Calu3 (cell line): ENCODE measurements at regions of chr6 and their contacts with region 1.

Region 1: GRCh38 chr6:3410385-3411360 is 46.2 kb downstream of the SLC22A23 start:
- DNase-seq: peak; percentile 60
- H3K4me3 Mint-ChIP-seq: no peak overlapping the region
- H3K27ac Mint-ChIP-seq: peak overlapping the region; percentile 41
- H3K4me1 Mint-ChIP-seq: peaks cover 28% of the 10 kb centered on the region
- H3K27me3 Mint-ChIP-seq: no peaks in the 10 kb centered on the region
- CTCF ChIP-seq: peak; percentile 66

Region 2: DNA sequence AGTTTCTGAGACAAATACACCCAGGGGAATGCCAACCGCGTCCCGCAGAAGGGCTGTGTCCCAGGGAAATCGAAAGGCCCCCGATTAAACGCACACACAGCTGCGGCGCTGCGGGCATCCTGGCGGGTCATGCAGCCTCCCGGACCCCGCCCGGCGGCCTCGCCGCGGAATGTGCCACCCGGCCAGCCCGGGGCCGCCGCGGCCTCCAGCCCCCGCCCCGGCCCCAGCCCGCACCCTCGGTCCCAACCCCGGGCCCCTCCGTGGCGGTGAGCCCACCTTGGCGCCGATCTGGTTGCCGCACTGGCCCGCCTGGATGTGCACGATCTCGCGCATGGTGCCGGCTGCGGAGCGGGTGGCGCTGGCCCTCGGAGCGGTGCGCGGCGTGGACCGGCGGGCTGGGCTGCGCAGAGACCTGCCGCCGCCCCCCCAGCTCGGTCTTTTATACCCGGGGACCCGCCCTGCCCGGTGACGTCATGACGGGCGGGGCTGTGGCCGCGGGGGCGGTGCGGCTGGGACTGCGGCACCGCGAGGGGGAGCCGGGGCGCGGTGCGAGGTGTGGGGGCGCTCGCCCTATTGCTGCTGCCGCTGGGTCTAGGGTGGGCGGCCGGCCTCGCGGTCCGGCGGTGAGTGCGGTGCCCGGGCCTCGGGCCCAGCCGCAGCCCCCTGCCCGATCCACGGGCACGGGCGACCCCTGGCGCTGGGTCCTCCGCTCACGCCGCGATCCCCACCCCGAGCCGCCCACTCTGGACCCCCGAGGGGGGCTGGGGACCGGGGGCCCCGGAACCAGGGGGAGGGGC is 253.3 kb before region 1 on chr6 and contains the start of gene TUBB2A:
- CTCF ChIA-PET with region 1: no interaction called
- intact Hi-C with region 1: no loop called
- DNase-seq: peak; percentile 84
- H3K4me3 Mint-ChIP-seq: peak within 1 kb of the TSS; percentile 68
- H3K27ac Mint-ChIP-seq: peak within 1 kb of the TSS; percentile 81
- H3K4me1 Mint-ChIP-seq: peaks cover 10% of the 10 kb centered on the region
- H3K27me3 Mint-ChIP-seq: no peaks in the 10 kb centered on the region
- CTCF ChIP-seq: peak; percentile 56
- total RNA-seq, gene TUBB2A: 16.0 and 17.6 TPM in 2 replicates

Region 3: GRCh38 chr6:3176562-3177355 is 233.9 kb before region 1 on chr6:
- CTCF ChIA-PET with region 1: interaction called, 11 read pairs
- intact Hi-C with region 1: no loop called
- DNase-seq: no peak
- H3K4me3 Mint-ChIP-seq: no peak overlapping the region
- H3K27ac Mint-ChIP-seq: no peak overlapping the region
- H3K4me1 Mint-ChIP-seq: no peaks in the 10 kb centered on the region
- H3K27me3 Mint-ChIP-seq: peaks cover 13% of the 10 kb centered on the region
- CTCF ChIP-seq: no peak

Region 4: DNA sequence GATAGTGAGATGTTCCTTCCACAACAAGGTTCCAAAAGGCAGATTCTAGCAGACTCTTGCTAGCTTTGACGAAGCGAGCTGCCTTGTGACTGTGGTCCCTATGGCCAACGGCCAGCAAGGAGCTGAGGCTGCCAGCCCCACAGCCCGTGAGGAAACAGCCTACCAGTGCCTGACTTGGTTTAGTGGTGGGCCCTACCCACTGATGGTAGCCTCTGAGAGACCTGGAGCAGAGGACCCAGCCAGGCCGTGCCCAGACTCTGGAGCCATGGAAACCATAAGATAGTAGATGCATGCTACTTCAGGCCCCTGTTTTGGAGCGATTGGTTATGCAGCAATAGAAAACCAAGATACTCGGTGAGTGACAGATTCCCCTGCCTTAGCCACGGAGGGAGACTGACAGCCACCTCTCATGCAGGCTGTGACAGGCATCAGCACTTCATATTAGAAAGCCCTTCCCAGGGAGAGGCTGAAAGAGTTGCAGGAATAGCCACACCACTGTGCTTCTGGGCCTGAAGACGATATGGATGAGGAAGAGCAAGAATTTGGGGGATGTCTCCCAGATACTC is 132.7 kb before region 1 on chr6:
- CTCF ChIA-PET with region 1: no interaction called
- intact Hi-C with region 1: loop called (anchors 10 kb)
- DNase-seq: no peak
- H3K4me3 Mint-ChIP-seq: no peak overlapping the region
- H3K27ac Mint-ChIP-seq: no peak overlapping the region
- H3K4me1 Mint-ChIP-seq: no peaks in the 10 kb centered on the region
- H3K27me3 Mint-ChIP-seq: no peaks in the 10 kb centered on the region
- CTCF ChIP-seq: no peak

Region 5: GRCh38 chr6:3456755-3457466 is 46.2 kb after region 1 on chr6 and contains the start of gene SLC22A23:
- CTCF ChIA-PET with region 1: interaction called, 4 read pairs
- intact Hi-C with region 1: loop called (anchors 5 kb)
- DNase-seq: peak; percentile 73
- H3K4me3 Mint-ChIP-seq: peak within 1 kb of the TSS; percentile 71
- H3K27ac Mint-ChIP-seq: peak within 1 kb of the TSS; percentile 86
- H3K4me1 Mint-ChIP-seq: peaks cover 9% of the 10 kb centered on the region
- H3K27me3 Mint-ChIP-seq: peaks cover 16% of the 10 kb centered on the region
- CTCF ChIP-seq: peak; percentile 75
- total RNA-seq, gene SLC22A23: 3.9 and 4.3 TPM in 2 replicates